CD4-positive, alpha-beta memory T cell (primary cell): ENCODE measurements at regions of chr22 and their contacts with region 1.

Region 1: DNA sequence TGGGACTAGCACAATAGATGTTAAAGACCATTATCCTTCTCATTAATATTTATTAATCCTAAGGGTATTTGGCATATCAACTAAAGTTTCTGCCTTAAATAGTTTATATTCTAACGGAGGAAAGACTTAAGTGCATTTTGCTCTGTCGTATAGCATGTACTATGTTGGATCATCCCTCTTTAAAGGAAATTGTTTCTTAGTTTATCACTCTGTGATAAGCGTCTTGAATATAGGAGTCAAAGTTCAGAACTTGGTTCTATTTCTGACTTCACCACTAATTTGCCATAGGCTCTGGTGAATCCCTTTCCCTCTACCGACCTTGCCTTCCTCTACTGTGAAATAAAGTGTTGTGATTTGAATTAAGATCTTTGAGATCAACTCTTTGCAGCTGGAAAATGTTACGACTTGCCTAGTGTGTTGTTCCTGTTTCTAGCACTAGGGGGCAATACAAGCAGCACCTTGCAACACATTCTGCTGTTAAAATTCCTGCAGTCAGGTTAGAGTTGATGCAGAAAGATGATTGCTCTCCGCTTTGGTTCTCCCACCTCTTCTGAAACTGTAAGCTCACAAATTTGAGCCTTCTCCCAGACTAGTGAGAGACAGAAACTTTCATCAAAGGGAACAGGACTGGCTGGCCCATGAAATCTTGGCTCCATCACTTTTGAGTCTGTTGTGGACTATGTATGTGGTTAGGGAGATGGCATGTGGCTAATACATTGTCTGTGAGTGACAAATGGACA is 27.8 kb upstream of the ZNRF3 start:
- DNase-seq: peak; percentile 48 to 63 (median 59)
- H3K4me3 ChIP-seq: no peak overlapping the region
- H3K4me3 Mint-ChIP-seq: no peak overlapping the region
- H3K27ac ChIP-seq: no peak overlapping the region
- H3K27ac Mint-ChIP-seq: no peak overlapping the region
- H3K4me1 ChIP-seq: no peaks in the 10 kb centered on the region
- H3K4me1 Mint-ChIP-seq: peaks cover 0 to 6% (median 0%) of the 10 kb centered on the region in 4 donors
- H3K27me3 ChIP-seq: no peaks in the 10 kb centered on the region
- H3K27me3 Mint-ChIP-seq: peaks cover 0 to 2% of the 10 kb centered on the region in 2 donors

Region 2: DNA sequence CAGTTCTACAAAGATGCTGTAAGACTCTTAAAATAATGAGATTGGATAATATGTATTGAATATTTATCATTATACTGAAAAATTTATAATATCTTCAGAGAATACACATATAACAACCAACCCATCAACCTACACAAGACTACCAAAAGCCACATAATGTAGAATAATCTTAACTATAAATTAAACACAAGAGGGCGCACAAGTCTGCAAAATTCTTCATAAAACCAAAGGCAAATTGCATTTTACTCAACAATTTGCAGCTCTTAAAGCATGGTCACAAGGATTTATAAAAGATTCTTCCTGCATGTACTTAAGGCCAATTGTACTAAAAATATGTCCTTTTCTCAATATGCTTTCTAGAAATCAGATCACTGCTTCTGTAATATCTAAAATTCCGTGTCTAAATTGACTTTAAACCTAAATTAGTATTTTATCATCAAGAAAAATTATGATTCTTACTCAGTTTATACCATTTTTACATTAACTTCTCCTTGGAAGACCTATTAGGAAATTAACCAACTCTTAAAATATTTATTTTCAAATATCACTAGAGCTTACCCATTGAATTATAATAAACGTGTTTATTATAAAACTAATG is 254.9 kb before region 1 on chr22:
- CTCF ChIA-PET with region 1: interaction called, 12 read pairs
- POLR2A ChIA-PET with region 1: no interaction called
- intact Hi-C with region 1: loop called (anchors 1 kb)
- DNase-seq: peak; percentile 31 to 63 (median 59)
- H3K4me3 ChIP-seq: no peak overlapping the region
- H3K4me3 Mint-ChIP-seq: no peak overlapping the region
- H3K27ac ChIP-seq: no peak overlapping the region
- H3K27ac Mint-ChIP-seq: no peak overlapping the region
- H3K4me1 ChIP-seq: no peaks in the 10 kb centered on the region
- H3K4me1 Mint-ChIP-seq: no peaks in the 10 kb centered on the region
- H3K27me3 ChIP-seq: peaks cover 13% of the 10 kb centered on the region
- H3K27me3 Mint-ChIP-seq: peaks cover 6 to 14% of the 10 kb centered on the region in 2 donors

Region 3: DNA sequence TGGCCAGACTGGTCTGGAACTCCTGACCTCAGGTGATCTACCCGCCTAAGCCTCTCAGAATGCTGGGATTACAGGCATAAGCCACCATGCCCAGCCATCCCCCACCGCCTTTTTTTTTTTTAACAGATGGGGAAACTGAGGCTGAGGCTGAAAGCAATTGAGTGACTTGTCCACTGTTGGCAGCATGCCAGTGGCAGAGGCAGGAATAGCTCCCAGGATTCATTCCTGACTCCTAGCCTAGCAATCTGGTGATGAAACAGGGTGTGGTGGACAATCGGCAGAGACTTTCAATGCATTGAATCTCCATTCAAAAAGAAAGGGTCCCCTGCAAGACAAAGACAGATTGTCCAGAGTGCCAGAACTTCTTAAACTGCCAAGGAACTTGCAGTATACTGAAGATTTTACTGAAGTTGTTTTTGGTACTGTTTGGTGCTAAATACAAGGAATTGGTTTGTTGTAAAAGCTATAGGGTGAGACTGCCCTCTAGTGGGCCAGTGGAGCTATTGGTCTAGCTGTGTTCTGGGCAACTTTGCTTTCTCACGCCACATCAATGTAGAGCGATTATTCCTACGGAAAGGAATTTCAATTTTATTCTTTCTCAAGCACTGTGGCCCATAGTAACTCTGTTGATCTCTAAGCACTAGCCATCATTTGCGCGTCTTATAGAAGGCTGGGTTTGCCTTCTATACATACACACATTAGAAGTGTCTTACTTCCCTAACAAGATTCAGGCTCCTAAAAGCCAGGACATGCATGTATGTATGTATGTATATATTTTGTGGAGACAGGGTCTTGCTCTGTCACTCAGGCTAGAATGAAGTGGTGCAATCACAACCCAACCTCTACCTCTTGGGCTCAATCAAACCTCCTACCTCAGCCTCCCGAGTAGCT is 185.1 kb after region 1 on chr22:
- CTCF ChIA-PET with region 1: interaction called, 163 read pairs
- POLR2A ChIA-PET with region 1: no interaction called
- intact Hi-C with region 1: loop called (anchors 1 kb)
- DNase-seq: peak; percentile 62 to 68 (median 67)
- H3K4me3 ChIP-seq: no peak overlapping the region
- H3K4me3 Mint-ChIP-seq: no peak overlapping the region
- H3K27ac ChIP-seq: no peak overlapping the region
- H3K27ac Mint-ChIP-seq: no peak overlapping the region
- H3K4me1 ChIP-seq: no peaks in the 10 kb centered on the region
- H3K4me1 Mint-ChIP-seq: peaks cover 0 to 3% (median 0%) of the 10 kb centered on the region in 4 donors
- H3K27me3 ChIP-seq: no peaks in the 10 kb centered on the region
- H3K27me3 Mint-ChIP-seq: peaks cover 0 to 3% of the 10 kb centered on the region in 2 donors